HEK293 (cell line): ENCODE measurements at regions of chr10 and their contacts with region 1.

Region 1: DNA sequence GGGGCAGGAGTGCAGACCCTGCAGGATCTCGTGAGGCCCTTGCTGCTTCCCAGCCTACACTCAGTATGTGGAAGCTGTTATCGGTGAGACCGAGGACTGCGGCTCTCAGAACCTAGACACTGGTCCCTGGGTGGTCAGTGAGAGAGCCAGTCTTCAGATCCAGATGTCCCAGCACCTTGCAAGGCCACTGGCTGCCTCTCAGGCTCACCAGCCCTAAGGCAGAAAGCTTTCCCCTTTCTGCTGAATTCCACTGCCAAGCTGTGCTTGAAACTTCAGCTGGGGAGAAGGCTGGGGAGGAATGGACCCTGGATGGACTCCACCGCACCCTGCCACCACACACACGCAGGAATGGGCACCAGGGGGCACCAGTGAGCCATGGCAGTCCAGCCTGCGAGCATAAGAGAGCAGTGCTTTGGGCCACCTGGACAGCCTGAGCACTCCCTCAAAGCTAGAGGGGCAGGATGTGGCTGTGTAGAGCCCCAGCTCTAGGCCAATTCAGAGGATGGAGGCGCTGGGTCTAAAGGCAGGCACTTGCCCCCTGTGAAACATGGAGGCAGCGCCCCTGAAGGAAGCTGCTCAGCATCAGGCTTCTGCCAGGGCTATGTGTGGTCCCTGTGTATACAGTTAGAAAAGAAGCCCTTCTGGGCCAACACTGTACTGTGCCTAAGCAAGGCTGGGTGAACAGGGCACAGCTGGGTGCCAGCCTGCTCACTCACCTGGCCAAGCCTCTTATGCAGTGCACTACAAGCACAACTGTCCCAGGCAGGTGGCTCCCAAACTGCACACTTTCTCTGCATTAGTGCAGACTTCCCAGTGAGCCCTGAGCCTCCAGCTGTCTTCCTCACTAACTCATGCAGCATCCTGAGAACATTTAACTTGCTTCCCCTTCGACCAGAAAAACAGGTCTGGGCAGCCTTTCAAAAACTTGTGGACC is 21.6 kb downstream of the TMEM72 start:
- H3K4me3 ChIP-seq: no peak overlapping the region
- H3K27ac ChIP-seq: no peak overlapping the region
- H3K4me1 ChIP-seq: no peaks in the 10 kb centered on the region; the same call in 1 of the 2 replicates
- CTCF ChIP-seq: peak; percentile 95

Region 2: GRCh38 chr10:44857363-44858016 is 75.3 kb before region 1 on chr10:
- CTCF ChIA-PET with region 1: no interaction called
- POLR2A ChIA-PET with region 1: no interaction called
- H3K4me3 ChIP-seq: no peak overlapping the region
- H3K27ac ChIP-seq: no peak overlapping the region
- H3K4me1 ChIP-seq: no peaks in the 10 kb centered on the region
- CTCF ChIP-seq: peak; percentile 83

Region 3: DNA sequence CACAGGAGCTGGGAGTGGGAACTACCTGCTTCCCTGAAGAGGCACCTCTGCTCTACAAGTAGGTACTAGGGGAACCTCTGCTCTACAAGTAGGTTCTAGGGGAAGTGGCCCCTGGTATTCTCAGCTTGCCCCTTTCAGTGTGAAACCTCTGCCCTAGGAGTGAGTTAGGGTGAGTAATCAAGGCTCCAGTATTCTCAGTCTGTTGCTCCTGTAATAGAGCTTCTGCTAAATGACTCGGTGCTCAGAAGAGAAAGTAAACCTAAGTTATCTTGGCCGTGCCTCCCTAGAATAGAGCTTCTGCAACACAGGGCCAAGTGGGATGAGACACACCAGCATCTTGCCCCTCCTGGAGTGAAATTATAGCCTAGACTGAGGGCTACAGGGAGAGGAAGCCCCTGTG is 13.4 kb after region 1 on chr10:
- CTCF ChIA-PET with region 1: interaction called, 12 read pairs
- POLR2A ChIA-PET with region 1: no interaction called
- H3K4me3 ChIP-seq: no peak overlapping the region
- H3K27ac ChIP-seq: no peak overlapping the region
- H3K4me1 ChIP-seq: peaks cover 3% of the 10 kb centered on the region
- CTCF ChIP-seq: no peak

Region 4: DNA sequence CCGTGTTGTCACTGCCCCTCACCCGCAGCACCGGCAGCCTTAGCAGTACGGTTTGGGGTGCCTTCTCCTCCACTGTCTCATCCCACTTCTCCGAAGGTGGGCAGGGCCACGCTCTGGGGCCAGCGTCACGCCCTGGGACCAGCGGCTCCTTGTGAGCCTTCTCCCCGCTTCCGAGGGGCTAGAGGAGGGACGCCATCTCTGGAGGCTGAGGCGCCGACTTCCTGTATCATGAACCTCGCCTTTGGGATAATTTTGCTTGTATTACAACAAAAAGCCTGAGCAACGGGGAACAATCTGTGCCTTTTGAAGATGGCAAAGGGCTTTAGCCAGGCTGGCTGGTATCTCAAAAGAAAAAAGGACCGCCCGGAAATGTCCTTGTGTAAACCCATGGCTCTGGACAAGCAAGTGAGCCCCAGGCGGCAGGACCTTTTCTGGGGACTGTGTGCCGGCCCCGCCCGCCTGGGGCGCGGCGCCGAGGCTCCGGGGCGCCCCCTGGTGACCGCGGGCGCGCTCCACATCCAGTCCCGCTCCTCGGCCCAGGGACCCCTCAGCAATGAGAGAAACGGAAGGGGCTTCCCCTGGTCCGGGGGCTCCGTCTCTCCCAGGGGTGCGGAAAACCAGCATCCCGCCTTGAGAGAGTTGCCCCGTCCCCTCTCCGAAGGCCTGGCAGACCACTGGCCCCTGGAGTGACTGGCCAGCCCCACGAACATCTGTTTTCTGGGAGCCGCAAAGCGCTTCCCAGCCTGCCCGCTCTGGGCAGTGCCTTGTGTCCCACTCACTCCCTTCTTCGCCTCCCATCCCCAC is 42.0 kb after region 1 on chr10:
- CTCF ChIA-PET with region 1: interaction called, 15 read pairs
- POLR2A ChIA-PET with region 1: interaction called, 5 read pairs
- H3K4me3 ChIP-seq: peak overlapping the region; percentile 39
- H3K27ac ChIP-seq: peak overlapping the region; percentile 28; the same call in 1 of the 2 replicates
- H3K4me1 ChIP-seq: peaks cover 18% of the 10 kb centered on the region
- CTCF ChIP-seq: peak; percentile 82

Region 5: GRCh38 chr10:44995914-44996636 is 63.3 kb after region 1 on chr10:
- CTCF ChIA-PET with region 1: interaction called, 13 read pairs
- POLR2A ChIA-PET with region 1: no interaction called
- H3K4me3 ChIP-seq: no peak overlapping the region
- H3K27ac ChIP-seq: no peak overlapping the region
- H3K4me1 ChIP-seq: no peaks in the 10 kb centered on the region
- CTCF ChIP-seq: no peak

Region 6: GRCh38 chr10:45008524-45009161 is 75.9 kb after region 1 on chr10:
- CTCF ChIA-PET with region 1: interaction called, 11 read pairs
- POLR2A ChIA-PET with region 1: no interaction called
- H3K4me3 ChIP-seq: no peak overlapping the region
- H3K27ac ChIP-seq: no peak overlapping the region
- H3K4me1 ChIP-seq: no peaks in the 10 kb centered on the region
- CTCF ChIP-seq: peak; percentile 88